ENCODE measurements at regions of chr12 and their contacts with region 1.

Region 1: GRCh38 chr12:52980693-52981423 is 25.4 kb upstream of the EIF4B start:
- DNase-seq: peak; percentile 98
- ATAC-seq: peak; percentile 81
- H3K4me3 ChIP-seq: no peak overlapping the region
- H3K27ac ChIP-seq: peak overlapping the region; percentile 6; the same call in 1 of the 2 replicates
- H3K4me1 ChIP-seq: peaks cover 15 to 25% of the 10 kb centered on the region in 2 experiments; a peak in 3 of 4 replicates
- H3K27me3 ChIP-seq: no peaks in the 10 kb centered on the region
- CTCF ChIP-seq: peak in 2 of 3 experiments; percentile 98 to 100; a peak in 4 of 6 replicates
- POLR2A ChIP-seq: no peak
- RAD21 ChIP-seq: no peak

Region 2: DNA sequence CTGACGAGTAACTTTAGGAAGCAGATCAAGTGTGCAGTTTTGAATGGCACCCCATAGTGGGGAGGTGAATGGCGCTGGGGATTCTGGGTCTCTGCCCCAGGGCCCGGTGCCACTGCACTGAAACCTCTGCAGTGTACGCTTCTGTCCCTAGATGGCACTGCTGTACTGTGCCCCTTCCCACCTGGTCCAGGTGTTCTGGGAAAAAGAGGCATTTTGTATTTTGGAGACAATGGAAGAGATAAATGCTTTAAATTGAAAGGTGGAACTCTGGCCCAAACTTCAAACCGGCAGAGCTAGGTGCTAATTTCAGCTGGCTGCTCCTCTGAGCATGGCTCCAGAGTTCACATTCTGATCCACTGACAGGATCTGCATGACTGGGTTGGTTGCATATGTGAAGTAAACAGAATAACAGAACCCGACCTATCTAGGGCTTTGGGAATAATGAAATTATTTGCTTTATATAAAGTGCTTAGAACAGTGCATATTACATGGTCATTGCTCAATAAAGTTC is 841.3 kb before region 1 on chr12:
- CTCF ChIA-PET with region 1: interaction called, 9 read pairs
- POLR2A ChIA-PET with region 1: no interaction called
- RAD21 ChIA-PET with region 1: interaction called in 1 of 2 experiments, 5 read pairs
- intact Hi-C with region 1: loop called (anchors 2 kb)
- DNase-seq: no peak
- ATAC-seq: peak; percentile 73
- H3K4me3 ChIP-seq: no peak overlapping the region
- H3K27ac ChIP-seq: no peak overlapping the region
- H3K4me1 ChIP-seq: peaks cover 19 to 43% of the 10 kb centered on the region in 2 experiments
- H3K27me3 ChIP-seq: no peaks in the 10 kb centered on the region
- CTCF ChIP-seq: peak in 2 of 3 experiments; percentile 96 to 98; a peak in 4 of 6 replicates
- POLR2A ChIP-seq: no peak
- RAD21 ChIP-seq: no peak

Region 3: DNA sequence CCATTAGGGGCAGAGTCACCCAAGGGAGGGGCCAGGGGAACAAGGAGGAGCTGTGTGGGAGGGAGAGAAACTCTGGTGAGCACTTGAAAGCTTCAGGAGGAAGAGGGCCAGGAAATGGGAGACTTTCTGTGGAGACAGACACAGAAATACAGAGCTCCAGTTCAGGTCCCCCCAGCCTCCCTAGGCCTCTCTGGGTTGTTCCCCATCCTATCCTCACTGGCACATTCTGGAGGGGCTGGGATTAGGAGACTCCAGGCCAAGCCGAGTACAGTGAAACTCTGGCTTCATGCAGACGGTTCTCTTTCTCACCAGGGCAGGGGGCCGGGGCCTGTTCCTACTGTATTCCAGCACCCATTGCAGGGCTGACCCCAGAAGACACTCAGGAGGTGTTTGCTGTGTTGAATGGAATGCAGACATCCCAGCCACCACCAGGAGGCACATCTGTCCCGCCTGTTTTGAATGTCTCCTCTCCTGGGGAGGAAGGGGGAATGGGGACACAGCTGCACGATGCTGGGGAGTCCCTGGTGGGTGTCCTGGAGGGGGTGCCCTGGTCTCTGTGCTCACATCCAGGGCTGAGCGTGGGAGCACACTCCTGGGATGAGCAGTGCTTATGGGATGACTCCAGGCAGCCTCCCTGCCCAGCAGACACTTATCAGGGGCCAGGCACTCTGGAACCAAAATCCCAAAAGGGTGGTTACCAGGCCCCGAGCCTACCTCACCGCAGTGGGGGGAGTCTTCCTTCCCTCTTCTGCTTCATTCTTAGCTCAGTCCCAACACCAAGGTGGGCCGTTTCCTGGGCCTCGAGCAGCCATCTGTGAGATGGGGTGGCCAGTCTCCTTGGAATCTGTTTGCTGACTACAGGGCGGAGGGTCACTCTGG is 589.9 kb before region 1 on chr12:
- CTCF ChIA-PET with region 1: interaction called, 11 read pairs
- POLR2A ChIA-PET with region 1: no interaction called
- RAD21 ChIA-PET with region 1: interaction called in 1 of 2 experiments, 3 read pairs
- intact Hi-C with region 1: no loop called
- DNase-seq: peak; percentile 24
- ATAC-seq: peak; percentile 79
- H3K4me3 ChIP-seq: no peak overlapping the region
- H3K27ac ChIP-seq: no peak overlapping the region
- H3K4me1 ChIP-seq: peaks cover 0 to 23% of the 10 kb centered on the region in 2 experiments; a peak in 1 of 4 replicates
- H3K27me3 ChIP-seq: no peaks in the 10 kb centered on the region
- CTCF ChIP-seq: peak; percentile 84 to 93 (median 85)
- POLR2A ChIP-seq: no peak
- RAD21 ChIP-seq: peak; percentile 91

Region 4: DNA sequence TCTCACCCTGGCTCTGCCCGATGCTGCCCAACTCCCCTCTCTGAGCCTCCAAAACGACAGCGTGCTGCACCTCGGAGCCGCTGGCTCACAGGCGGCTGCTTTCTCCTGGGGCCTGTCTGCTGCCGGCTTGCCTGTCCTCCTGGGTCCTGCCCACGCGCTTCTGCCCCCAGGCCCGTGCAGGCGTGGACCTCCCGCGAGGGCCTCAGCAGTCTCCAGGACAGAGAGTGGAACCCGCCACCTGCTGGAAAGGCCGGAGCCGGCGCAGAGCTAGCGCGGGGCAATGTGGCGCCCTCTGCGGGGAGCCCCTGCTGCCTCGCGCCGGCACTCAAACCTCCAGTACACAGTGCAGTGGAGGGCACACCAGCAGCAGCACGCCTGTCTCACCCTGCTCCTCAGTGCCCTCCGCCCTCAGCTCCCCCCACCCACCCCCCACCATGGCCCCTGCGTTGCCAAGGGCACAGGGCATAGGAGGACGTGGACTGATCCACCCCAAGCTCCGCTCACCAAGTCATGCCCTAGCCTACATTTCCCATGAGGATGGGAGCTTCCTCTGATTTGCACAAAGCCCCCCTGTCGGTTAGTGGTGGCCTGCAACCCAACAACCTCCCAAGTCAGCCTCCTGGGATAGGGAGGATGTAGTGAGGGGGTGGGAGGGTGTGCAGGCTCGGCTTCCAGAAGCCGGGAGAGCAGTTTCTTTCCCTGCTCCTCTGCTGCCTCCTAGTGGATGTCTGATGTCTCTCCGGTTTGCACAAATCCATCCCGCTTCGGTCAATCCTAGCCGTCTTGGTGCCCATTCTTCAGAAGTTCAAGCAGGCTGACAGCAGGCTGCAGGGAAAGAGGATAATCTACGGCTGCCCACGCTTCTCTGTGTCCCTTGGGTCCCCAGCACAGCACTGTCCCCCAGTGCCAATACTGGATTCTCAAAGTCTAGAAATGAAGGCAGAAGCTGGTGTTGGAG is 101.2 kb before region 1 on chr12:
- CTCF ChIA-PET with region 1: interaction called, 370 read pairs
- POLR2A ChIA-PET with region 1: interaction called, 50 read pairs
- RAD21 ChIA-PET with region 1: interaction called, 48 to 90 read pairs
- intact Hi-C with region 1: loop called (anchors 1 kb)
- DNase-seq: peak; percentile 86
- ATAC-seq: peak; percentile 87
- H3K4me3 ChIP-seq: peak overlapping the region; percentile 30 to 49
- H3K27ac ChIP-seq: peak overlapping the region; percentile 44
- H3K4me1 ChIP-seq: peaks cover 33 to 61% of the 10 kb centered on the region in 2 experiments
- H3K27me3 ChIP-seq: no peaks in the 10 kb centered on the region
- CTCF ChIP-seq: peak in 2 of 3 experiments; percentile 76 to 95; a peak in 4 of 6 replicates
- POLR2A ChIP-seq: no peak
- RAD21 ChIP-seq: no peak

Region 5: GRCh38 chr12:52903285-52903854 is 77.5 kb before region 1 on chr12:
- CTCF ChIA-PET with region 1: interaction called, 51 read pairs
- POLR2A ChIA-PET with region 1: interaction called, 42 read pairs
- RAD21 ChIA-PET with region 1: interaction called, 8 to 9 read pairs
- intact Hi-C with region 1: loop called (anchors 1 kb)
- DNase-seq: no peak
- ATAC-seq: peak; percentile 12
- H3K4me3 ChIP-seq: peak overlapping the region; percentile 91 to 97
- H3K27ac ChIP-seq: peak overlapping the region; percentile 82
- H3K4me1 ChIP-seq: peaks cover 58 to 77% of the 10 kb centered on the region in 2 experiments
- H3K27me3 ChIP-seq: no peaks in the 10 kb centered on the region
- CTCF ChIP-seq: no peak
- POLR2A ChIP-seq: no peak
- RAD21 ChIP-seq: no peak

Region 6: DNA sequence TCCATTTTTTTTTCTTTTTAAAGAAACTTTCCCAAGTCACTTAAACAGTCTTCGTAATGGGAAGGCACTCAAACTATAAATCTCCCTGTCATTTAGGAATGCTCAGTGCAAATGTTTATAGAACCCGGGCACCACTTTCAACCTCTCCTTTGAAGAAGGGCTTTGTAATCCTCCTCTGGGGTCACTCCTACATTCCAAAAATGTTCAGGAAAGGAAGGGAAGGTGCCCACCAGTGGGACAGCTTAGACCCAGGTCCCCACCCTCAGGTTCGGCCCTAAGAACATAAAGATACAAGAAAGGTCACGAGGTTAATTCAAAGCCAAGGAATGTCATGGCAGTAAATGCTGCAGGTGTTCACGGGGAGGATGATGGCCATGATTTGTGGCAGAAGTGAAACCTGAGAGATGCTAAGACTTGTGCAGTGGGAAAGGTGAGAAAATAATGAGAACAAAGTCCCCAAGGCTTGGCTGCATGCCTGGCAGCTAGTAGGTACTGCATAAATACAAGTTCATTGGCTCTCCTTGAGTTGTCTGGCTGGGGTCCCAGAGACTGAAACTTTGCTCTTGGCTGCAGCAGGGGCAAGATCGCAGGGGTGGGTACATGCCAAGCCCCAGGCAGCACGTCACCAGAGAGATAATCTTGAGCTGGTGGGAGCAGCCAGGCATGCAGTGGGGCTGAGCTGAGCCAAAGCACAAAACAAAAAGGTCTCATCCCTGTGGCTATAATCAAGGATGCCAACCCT is 10.9 kb before region 1 on chr12:
- CTCF ChIA-PET with region 1: interaction called, 16 read pairs
- POLR2A ChIA-PET with region 1: interaction called, 4 read pairs
- RAD21 ChIA-PET with region 1: interaction called in 1 of 2 experiments, 6 read pairs
- intact Hi-C with region 1: no loop called
- DNase-seq: no peak
- ATAC-seq: peak; percentile 48
- H3K4me3 ChIP-seq: peak overlapping the region; percentile 9 to 14; a peak in 1 of 4 replicates
- H3K27ac ChIP-seq: peak overlapping the region; percentile 81
- H3K4me1 ChIP-seq: peaks cover 60 to 62% of the 10 kb centered on the region in 2 experiments
- H3K27me3 ChIP-seq: no peaks in the 10 kb centered on the region
- CTCF ChIP-seq: no peak
- POLR2A ChIP-seq: no peak
- RAD21 ChIP-seq: no peak; the same call in 1 of the 2 replicates

Region 7: GRCh38 chr12:53295070-53295890 is 314.4 kb after region 1 on chr12 and contains the start of gene PFDN5:
- CTCF ChIA-PET with region 1: no interaction called
- POLR2A ChIA-PET with region 1: no interaction called
- RAD21 ChIA-PET with region 1: no interaction called
- intact Hi-C with region 1: no loop called
- DNase-seq: peak; percentile 82
- ATAC-seq: peak; percentile 84
- H3K4me3 ChIP-seq: peak within 1 kb of the TSS; percentile 88 to 100
- H3K27ac ChIP-seq: peak within 1 kb of the TSS; percentile 74
- H3K4me1 ChIP-seq: peaks cover 21 to 41% of the 10 kb centered on the region in 2 experiments
- H3K27me3 ChIP-seq: no peaks in the 10 kb centered on the region
- CTCF ChIP-seq: no peak
- POLR2A ChIP-seq: peak; percentile 88
- RAD21 ChIP-seq: no peak
- total RNA-seq, gene PFDN5: 318 TPM